ENCODE measurements at regions of chr3 and their contacts with region 1.

Region 1: GRCh38 chr3:138898301-138898700 is 48.6 kb downstream of the FOXL2 start:
- DNase-seq: peak; percentile 9 to 73
- H3K4me3 ChIP-seq: no peak overlapping the region
- H3K27ac ChIP-seq: 0 out of 2 replicates have a peak overlapping the region, but pooled peaks have one; percentile 1
- H3K4me1 ChIP-seq: peaks cover 23% of the 10 kb centered on the region
- H3K27me3 ChIP-seq: no peaks in the 10 kb centered on the region
- CTCF ChIP-seq: no peak

Region 2: DNA sequence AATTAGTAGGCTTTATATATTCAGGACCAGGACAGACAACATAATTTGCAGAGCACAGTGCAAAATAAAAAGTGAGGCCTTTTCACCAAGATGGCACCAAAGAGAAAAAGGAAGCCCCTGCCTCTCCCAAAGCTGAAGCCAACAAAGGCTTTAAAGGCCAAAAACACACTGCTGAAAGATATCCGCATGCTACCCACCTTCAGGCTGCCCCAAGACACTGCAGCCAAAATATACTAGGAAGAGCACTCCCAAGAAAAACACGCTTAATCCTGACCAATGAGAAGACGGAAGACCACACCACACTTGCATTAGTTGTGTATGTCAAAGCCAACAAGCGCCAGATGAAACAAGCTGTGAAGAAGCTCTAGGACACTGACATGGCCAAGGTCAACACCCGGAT is 101.5 kb before region 1 on chr3:
- CTCF ChIA-PET with region 1: interaction called, 10 read pairs
- POLR2A ChIA-PET with region 1: no interaction called
- intact Hi-C with region 1: no loop called
- DNase-seq: no peak
- H3K4me3 ChIP-seq: no peak overlapping the region
- H3K27ac ChIP-seq: no peak overlapping the region
- H3K4me1 ChIP-seq: no peaks in the 10 kb centered on the region
- H3K27me3 ChIP-seq: no peaks in the 10 kb centered on the region
- CTCF ChIP-seq: no peak

Region 3: DNA sequence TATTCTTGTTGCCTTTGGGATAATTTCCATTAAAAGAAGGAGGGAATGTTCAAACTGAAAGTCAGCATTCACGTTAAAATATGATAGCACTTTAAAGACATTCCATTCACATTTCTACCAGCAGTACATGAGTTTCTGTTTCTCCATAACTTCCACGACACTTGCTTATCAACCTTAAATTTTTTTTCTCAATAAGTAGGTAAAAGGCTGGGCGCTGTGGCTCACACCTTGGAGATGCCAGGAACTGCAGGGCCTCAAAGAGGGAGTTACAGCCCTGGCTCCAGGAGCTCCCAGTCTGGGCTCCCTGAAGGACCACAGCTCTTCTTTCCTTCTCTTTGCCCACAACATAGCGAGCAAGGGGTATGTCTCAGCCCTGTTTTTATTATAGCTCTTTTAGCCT is 189.3 kb after region 1 on chr3:
- CTCF ChIA-PET with region 1: no interaction called
- POLR2A ChIA-PET with region 1: interaction called, 19 read pairs
- intact Hi-C with region 1: no loop called
- DNase-seq: no peak
- H3K4me3 ChIP-seq: no peak overlapping the region
- H3K27ac ChIP-seq: no peak overlapping the region
- H3K4me1 ChIP-seq: no peaks in the 10 kb centered on the region
- H3K27me3 ChIP-seq: no peaks in the 10 kb centered on the region
- CTCF ChIP-seq: no peak

Region 4: GRCh38 chr3:139128803-139129202 is 230.5 kb after region 1 on chr3:
- CTCF ChIA-PET with region 1: no interaction called
- POLR2A ChIA-PET with region 1: no interaction called
- intact Hi-C with region 1: no loop called
- DNase-seq: no peak
- H3K4me3 ChIP-seq: no peak overlapping the region
- H3K27ac ChIP-seq: no peak overlapping the region
- H3K4me1 ChIP-seq: no peaks in the 10 kb centered on the region
- H3K27me3 ChIP-seq: no peaks in the 10 kb centered on the region
- CTCF ChIP-seq: no peak

Region 5: GRCh38 chr3:140770988-140771667 is 1872.8 kb after region 1 on chr3:
- CTCF ChIA-PET with region 1: no interaction called
- POLR2A ChIA-PET with region 1: no interaction called
- intact Hi-C with region 1: no loop called
- DNase-seq: no peak
- H3K4me3 ChIP-seq: no peak overlapping the region
- H3K27ac ChIP-seq: no peak overlapping the region
- H3K4me1 ChIP-seq: no peaks in the 10 kb centered on the region
- H3K27me3 ChIP-seq: no peaks in the 10 kb centered on the region
- CTCF ChIP-seq: no peak

Measured in PC-9 (cell line).